Aorta (tissue), 5 donors: ENCODE measurements at regions of chr18 and their contacts with region 1.

Region 1: GRCh38 chr18:3447895-3448837 is 1.8 kb upstream of the TGIF1 start:
- DNase-seq: peak; percentile 97 to 98
- ATAC-seq: peak; percentile 86
- H3K4me3 ChIP-seq: peak overlapping the region; percentile 67 to 85
- H3K27ac ChIP-seq: peak overlapping the region; percentile 86 to 88
- H3K4me1 ChIP-seq: peaks cover 0 to 1% of the 10 kb centered on the region in 2 donors
- H3K27me3 ChIP-seq: no peaks in the 10 kb centered on the region

Region 2: GRCh38 chr18:3261371-3262246 is 186.6 kb before region 1 on chr18 and contains the start of gene MYL12B:
- intact Hi-C with region 1: loop called in 1 of 2 experiments (anchors 5 kb)
- DNase-seq: peak; percentile 87 to 92
- ATAC-seq: peak; percentile 95
- H3K4me3 ChIP-seq: peak within 1 kb of the TSS; percentile 65 to 87
- H3K27ac ChIP-seq: peak within 1 kb of the TSS; percentile 66 to 87
- H3K4me1 ChIP-seq: peaks cover 0 to 7% of the 10 kb centered on the region in 2 donors
- H3K27me3 ChIP-seq: no peaks in the 10 kb centered on the region
- total RNA-seq, gene MYL12B: 259 to 324 TPM

Region 3: DNA sequence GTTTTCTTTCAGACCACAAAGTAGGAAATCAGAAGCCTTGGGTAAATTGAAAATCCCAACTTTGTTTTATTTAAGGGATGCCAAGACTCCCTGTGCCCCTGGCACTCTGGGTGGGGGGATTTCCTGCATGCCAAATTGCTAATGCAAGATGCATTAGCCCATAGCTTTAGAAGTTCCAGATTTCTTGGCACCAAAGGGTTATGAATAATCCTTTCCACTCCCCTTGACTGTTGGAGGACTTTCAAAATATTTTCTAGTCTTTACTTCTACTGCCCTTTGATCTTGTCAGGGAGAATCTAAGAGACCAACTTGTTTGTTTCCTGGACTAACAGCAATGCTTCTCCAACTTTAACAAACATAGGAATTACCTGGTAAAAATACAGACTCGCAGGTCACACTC is 80.0 kb before region 1 on chr18:
- intact Hi-C with region 1: no loop called
- DNase-seq: no peak
- ATAC-seq: no peak
- H3K4me3 ChIP-seq: no peak overlapping the region
- H3K27ac ChIP-seq: no peak overlapping the region
- H3K4me1 ChIP-seq: peaks cover 0 to 2% of the 10 kb centered on the region in 2 donors
- H3K27me3 ChIP-seq: no peaks in the 10 kb centered on the region

Region 4: GRCh38 chr18:3652380-3653262 is 204.5 kb after region 1 on chr18:
- intact Hi-C with region 1: loop called in 1 of 2 experiments (anchors 5 kb)
- DNase-seq: peak; percentile 84 to 88
- ATAC-seq: peak; percentile 54
- H3K4me3 ChIP-seq: no peak overlapping the region
- H3K27ac ChIP-seq: peak overlapping the region in 1 of 2 donors; percentile 68
- H3K4me1 ChIP-seq: no peaks in the 10 kb centered on the region
- H3K27me3 ChIP-seq: no peaks in the 10 kb centered on the region

Region 5: GRCh38 chr18:3665780-3666525 is 217.8 kb after region 1 on chr18:
- intact Hi-C with region 1: loop called (anchors 5 kb)
- DNase-seq: peak; percentile 84 to 92
- ATAC-seq: peak; percentile 95
- H3K4me3 ChIP-seq: no peak overlapping the region
- H3K27ac ChIP-seq: peak overlapping the region; percentile 13 to 30
- H3K4me1 ChIP-seq: no peaks in the 10 kb centered on the region
- H3K27me3 ChIP-seq: no peaks in the 10 kb centered on the region